ENCODE measurements at regions of chr6 and their contacts with region 1.

Region 1: GRCh38 chr6:3057063-3057770 is 11.1 kb upstream of the RIPK1 start:
- DNase-seq: no peak
- ATAC-seq: no peak

Region 2: DNA sequence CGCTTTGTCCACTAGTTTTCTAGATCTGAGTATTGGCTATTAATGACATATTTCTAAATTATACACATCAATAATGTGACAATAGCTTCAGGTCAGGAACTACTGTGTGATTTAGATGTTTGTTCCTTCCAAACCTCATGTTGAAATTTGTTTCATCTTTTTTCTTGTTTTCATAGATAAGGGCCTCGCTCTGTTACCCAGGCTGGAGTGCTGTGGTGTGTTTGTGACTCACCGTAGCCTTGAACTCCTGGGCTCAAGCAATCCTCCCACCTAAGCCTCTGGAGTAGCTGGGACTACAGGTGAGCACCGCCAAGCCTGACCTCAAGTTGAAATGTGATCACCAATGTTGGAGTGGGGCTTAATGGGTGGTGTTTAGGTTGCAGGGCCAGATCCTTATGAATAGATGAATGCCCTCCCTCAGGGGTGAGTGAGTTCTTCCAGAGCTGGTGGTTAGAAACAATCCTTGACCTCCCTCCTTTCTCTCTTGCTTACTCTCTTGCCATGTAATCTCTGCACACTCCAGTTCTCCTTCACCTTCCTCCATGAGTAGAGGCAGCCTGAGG is 63.4 kb before region 1 on chr6:
- intact Hi-C with region 1: loop called (anchors 2 to 5 kb)
- DNase-seq: no peak
- ATAC-seq: no peak

Region 3: DNA sequence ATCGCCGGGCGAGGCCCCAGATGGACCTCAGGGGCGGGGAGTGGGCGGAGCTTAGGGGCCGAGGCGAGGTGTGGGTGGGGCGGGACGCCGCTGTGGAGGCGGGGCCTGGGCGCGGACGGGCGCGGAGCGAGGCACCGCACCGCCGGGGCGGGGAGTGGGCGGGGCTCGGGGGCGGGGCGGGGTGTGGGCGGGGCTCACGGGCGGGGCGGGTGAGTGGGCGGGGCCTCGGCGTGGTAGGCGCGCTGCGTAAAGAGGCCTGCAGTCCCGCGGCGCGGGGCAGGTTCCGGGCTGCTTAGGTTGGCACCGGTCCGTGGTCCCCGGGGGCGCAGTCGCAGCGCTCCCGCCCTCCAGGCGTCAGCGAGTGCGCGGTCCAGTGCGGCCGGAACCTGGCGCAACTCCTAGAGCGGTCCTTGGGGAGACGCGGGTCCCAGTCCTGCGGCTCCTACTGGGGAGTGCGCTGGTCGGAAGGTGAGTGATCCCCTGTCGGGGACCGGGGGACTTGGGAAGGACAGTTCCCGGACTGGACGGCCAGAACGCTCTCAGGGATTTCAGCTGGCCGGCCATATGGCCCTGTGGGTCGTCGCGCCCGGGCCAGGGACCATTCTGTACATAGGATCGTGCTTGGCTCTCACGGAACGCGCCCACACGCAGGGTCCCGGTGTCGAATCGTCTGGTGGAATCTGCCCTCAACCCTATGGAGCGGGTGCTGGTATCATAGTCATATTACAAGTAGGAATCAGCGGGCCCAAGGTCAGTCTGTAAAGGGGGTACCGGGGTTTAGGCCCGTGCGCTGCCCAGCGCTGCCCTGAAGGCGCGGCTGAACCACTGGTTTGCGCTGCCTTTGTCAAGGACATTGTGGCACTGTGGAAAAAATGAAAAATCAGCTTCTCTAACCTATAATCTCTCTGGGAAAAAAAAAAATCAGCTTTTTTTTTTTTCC is 57.3 kb before region 1 on chr6 and contains the start of gene NQO2:
- intact Hi-C with region 1: loop called (anchors 2 to 5 kb)
- DNase-seq: peak; percentile 95
- ATAC-seq: peak; percentile 94 to 96
- total RNA-seq, gene NQO2: 46.2 to 53.8 TPM

Region 4: DNA sequence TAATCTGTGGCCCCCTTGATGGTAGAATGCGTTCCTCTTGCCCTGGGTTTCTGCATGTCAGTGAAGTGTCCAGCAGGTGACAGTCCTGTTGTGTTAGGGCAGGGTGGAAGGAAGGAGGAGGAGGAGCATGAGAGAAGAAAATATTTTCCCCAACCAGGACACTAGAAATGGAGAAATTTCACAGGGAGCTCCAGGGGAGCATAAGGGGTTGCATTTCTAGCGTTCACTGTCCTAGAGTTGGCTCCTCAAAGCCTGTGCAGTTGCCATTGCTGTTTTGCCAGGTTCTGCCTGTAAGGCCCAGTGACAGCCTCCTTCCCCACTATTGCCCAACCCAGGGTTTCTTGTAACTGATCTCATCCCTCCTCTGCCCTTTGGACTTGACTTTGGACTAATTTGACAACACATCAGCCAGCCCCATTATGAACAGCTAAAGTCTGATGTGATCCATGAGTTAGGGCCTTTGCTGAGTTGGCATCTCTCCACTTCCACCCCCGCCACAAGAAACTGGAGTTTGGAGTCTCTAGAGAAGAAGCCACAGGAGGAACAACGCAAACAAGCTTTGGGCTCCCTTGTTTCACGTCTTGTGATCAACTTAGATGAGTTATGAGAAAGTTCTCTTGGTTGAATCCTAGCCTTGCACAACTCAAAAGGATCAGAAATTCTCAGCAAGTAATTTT is 778.0 kb after region 1 on chr6:
- intact Hi-C with region 1: no loop called
- DNase-seq: peak; percentile 64
- ATAC-seq: peak; percentile 76 to 86